ENCODE measurements at regions of chr5 and their contacts with region 1.

Region 1: GRCh38 chr5:31581498-31582099 is 49.5 kb downstream of the C5orf22 start:
- DNase-seq: peak in 4 of 14 experiments; percentile 16 to 59 (median 46)
- ATAC-seq: no peak
- H3K4me3 ChIP-seq: no peak overlapping the region
- H3K4me3 Mint-ChIP-seq: no peak overlapping the region
- H3K27ac ChIP-seq: no peak overlapping the region
- H3K27ac Mint-ChIP-seq: no peak overlapping the region
- H3K4me1 ChIP-seq: no peaks in the 10 kb centered on the region
- H3K4me1 Mint-ChIP-seq: no peaks in the 10 kb centered on the region
- H3K27me3 ChIP-seq: peaks cover 0 to 5% of the 10 kb centered on the region in 2 experiments
- H3K27me3 Mint-ChIP-seq: peaks cover 33% of the 10 kb centered on the region
- CTCF ChIP-seq: peak; percentile 67

Region 2: GRCh38 chr5:31809050-31809870 is 227.7 kb after region 1 on chr5:
- CTCF ChIA-PET with region 1: no interaction called
- POLR2A ChIA-PET with region 1: no interaction called
- intact Hi-C with region 1: loop called in 1 of 2 experiments (anchors 5 kb)
- DNase-seq: peak in 6 of 14 experiments; percentile 1 to 52 (median 10)
- ATAC-seq: no peak
- H3K4me3 ChIP-seq: no peak overlapping the region
- H3K4me3 Mint-ChIP-seq: no peak overlapping the region
- H3K27ac ChIP-seq: no peak overlapping the region
- H3K27ac Mint-ChIP-seq: no peak overlapping the region
- H3K4me1 ChIP-seq: no peaks in the 10 kb centered on the region
- H3K4me1 Mint-ChIP-seq: no peaks in the 10 kb centered on the region
- H3K27me3 ChIP-seq: no peaks in the 10 kb centered on the region
- H3K27me3 Mint-ChIP-seq: no peaks in the 10 kb centered on the region
- CTCF ChIP-seq: peak; percentile 22

Region 3: DNA sequence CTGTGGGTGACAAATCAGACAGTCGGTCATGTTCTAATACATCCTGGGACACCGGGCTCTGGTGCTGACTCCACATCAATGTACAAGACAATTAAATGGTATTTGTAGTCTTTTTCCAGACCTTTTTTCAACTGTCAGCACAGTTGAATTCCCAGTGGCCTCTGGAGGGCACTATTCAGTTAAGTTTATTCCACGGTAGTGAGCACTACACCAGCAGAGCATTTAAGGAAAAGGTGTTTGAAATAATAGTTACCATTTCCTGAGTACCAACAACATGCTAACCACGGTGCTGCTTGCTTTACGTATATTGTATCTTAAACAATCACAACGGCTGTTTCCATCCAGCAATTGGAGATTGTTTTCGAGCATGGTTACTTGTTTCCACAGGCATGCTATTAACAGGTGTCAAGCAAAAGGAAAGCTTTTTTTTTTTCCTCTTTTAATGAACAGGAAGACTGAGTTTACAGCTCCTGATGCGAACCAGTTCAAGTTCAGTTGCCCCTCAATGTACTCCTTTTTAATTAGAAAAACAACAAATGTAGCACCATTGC is 244.0 kb after region 1 on chr5:
- CTCF ChIA-PET with region 1: no interaction called
- POLR2A ChIA-PET with region 1: no interaction called
- intact Hi-C with region 1: loop called in 1 of 2 experiments (anchors 5 kb)
- DNase-seq: peak in 11 of 14 experiments; percentile 10 to 66 (median 32)
- ATAC-seq: peak; percentile 87
- H3K4me3 ChIP-seq: no peak overlapping the region
- H3K4me3 Mint-ChIP-seq: peak overlapping the region; percentile 56
- H3K27ac ChIP-seq: no peak overlapping the region
- H3K27ac Mint-ChIP-seq: no peak overlapping the region
- H3K4me1 ChIP-seq: no peaks in the 10 kb centered on the region
- H3K4me1 Mint-ChIP-seq: peaks cover 10% of the 10 kb centered on the region
- H3K27me3 ChIP-seq: peaks cover 0 to 2% of the 10 kb centered on the region in 2 experiments
- H3K27me3 Mint-ChIP-seq: peaks cover 8% of the 10 kb centered on the region
- CTCF ChIP-seq: peak; percentile 62

Region 4: DNA sequence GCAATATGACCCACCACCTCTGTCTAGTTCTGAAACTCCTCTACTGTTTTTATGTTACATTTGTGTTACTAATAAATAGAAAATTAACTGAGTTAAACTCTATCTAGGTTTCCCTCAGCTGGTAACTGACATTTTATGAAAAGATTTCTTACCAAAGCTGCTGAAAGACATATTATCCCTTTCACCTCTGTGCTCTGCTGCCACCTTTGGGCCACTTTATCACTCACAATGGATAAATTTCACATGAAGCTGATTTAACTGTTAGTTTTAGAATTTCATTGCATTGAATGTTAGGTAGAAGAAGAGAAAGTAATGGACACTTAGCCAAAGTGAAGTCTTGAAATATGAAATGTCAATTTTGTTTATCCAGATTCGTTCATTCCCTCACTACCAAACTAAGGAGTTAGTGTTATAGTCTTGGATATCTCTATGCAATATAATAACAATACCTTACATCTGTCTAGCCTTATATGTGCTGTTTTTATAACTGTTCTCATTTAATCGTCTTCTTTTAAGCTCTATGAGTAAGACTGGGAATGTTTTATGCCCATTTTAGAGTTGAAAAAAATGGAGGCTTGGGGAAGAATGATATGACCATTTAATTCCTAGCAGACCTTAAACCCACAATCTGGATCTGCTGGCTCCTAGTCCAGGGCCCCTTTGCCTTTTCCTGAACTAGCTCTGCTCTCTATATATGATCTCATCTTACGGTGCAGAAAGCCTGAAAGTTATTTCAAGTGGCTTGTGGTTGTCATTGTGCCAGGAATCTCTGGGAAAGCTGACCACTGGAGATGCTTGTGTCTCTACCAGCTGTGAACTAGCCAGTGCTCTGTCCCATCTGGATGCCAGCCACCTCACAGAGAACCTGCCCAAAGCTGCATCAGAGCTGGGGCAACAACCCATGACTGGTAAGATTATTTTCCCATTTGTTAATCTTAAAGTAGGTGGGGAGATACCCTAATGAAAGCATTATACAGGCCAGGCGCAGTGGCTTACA is 495.4 kb after region 1 on chr5:
- CTCF ChIA-PET with region 1: no interaction called
- POLR2A ChIA-PET with region 1: no interaction called
- intact Hi-C with region 1: loop called in 1 of 2 experiments (anchors 1 kb)
- DNase-seq: peak in 12 of 14 experiments; percentile 9 to 61 (median 30)
- ATAC-seq: peak; percentile 56
- H3K4me3 ChIP-seq: no peak overlapping the region
- H3K4me3 Mint-ChIP-seq: no peak overlapping the region
- H3K27ac ChIP-seq: no peak overlapping the region
- H3K27ac Mint-ChIP-seq: no peak overlapping the region
- H3K4me1 ChIP-seq: no peaks in the 10 kb centered on the region
- H3K4me1 Mint-ChIP-seq: no peaks in the 10 kb centered on the region
- H3K27me3 ChIP-seq: no peaks in the 10 kb centered on the region
- H3K27me3 Mint-ChIP-seq: no peaks in the 10 kb centered on the region
- CTCF ChIP-seq: peak; percentile 78

Region 5: DNA sequence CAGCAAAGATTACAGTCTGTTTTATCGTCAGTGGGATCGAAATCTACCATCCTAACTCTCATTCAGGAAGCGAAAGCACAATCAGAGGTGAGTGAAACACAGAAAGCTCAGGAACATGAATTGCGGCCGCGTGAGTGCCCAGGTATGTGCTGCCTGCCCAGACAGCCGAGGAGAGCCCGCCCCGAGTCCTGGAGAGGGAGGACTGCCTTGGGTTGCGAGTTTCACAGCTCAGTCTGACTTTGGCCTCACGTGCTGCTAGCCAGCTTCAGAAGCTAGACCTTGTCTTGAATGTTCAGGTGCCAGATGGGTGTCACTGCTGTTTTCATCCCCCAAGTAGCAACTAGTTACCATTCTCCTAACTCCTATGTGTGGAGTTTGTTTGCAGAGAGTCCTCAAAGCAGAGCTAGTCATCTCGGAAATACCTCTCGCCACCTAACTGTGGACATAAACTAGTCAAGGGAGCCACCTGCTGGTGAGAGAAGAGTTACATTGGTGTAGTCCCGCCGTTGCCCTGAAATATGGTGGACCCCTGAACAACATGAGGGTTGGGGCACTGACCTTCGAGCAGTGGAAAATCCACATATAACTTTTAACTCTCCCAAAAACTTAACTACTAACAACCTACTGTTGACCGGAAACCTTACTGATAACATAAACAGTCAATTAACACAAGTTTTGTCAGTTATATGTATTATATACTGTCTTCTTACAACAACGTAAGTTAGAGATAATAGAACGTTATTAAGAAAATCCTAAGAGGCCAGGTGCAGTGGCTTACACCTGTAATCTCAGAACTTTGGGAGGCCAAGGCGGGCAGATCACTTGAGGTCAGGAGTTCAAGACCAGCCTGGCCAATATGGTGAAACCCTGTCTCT is 511.6 kb after region 1 on chr5:
- CTCF ChIA-PET with region 1: interaction called, 4 read pairs
- POLR2A ChIA-PET with region 1: no interaction called
- intact Hi-C with region 1: loop called (anchors 1 kb)
- DNase-seq: peak; percentile 29 to 79 (median 54)
- ATAC-seq: peak; percentile 93
- H3K4me3 ChIP-seq: no peak overlapping the region
- H3K4me3 Mint-ChIP-seq: no peak overlapping the region
- H3K27ac ChIP-seq: no peak overlapping the region
- H3K27ac Mint-ChIP-seq: no peak overlapping the region
- H3K4me1 ChIP-seq: peaks cover 6% of the 10 kb centered on the region
- H3K4me1 Mint-ChIP-seq: peaks cover 7% of the 10 kb centered on the region
- H3K27me3 ChIP-seq: no peaks in the 10 kb centered on the region
- H3K27me3 Mint-ChIP-seq: no peaks in the 10 kb centered on the region
- CTCF ChIP-seq: peak; percentile 77